Activated CD4-positive, alpha-beta memory T cell treated with anti-CD3 and anti-CD28 coated beads for 36 hours (primary cell): ENCODE measurements at regions of chr7 and their contacts with region 1.

Region 1: DNA sequence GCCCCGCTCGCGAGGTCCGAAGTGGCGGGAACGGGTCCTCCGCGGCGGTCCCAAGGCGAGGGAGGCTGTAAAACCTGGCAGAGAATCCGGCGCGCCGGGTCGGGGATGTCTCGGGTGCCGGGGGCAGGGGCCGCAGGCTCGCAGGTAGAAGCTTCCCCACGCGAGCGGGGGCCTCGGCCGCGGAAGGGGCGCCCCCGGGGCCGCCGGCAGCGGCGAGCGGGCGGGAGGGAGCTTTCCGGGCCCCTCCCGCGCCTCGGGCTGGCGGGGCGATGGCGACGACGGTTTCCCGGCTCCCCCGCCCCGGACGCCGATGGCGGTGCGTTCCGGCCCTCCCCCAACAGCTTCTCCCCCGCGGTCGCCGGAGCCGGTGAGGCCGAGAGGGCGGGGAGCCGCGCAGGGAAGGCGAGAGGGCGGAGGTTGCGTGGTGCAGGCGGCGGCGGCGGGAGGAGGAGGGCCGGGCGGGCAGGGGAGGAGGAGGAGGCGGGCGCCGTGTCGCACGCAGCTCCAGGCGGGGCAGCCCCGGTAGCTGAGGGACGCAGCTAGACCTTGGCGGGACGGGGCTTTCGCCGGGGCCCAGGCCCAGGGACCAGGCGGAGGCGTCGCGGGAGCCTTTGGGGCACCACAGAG is at the start of gene CUL1:
- DNase-seq: peak; percentile 88
- H3K4me3 Mint-ChIP-seq: peak within 1 kb of the TSS; percentile 89
- H3K27ac Mint-ChIP-seq: peak within 1 kb of the TSS; percentile 98
- H3K4me1 Mint-ChIP-seq: peaks cover 57% of the 10 kb centered on the region
- H3K27me3 Mint-ChIP-seq: no peaks in the 10 kb centered on the region
- total RNA-seq, gene CUL1: 64.7 to 69.6 TPM

Region 2: DNA sequence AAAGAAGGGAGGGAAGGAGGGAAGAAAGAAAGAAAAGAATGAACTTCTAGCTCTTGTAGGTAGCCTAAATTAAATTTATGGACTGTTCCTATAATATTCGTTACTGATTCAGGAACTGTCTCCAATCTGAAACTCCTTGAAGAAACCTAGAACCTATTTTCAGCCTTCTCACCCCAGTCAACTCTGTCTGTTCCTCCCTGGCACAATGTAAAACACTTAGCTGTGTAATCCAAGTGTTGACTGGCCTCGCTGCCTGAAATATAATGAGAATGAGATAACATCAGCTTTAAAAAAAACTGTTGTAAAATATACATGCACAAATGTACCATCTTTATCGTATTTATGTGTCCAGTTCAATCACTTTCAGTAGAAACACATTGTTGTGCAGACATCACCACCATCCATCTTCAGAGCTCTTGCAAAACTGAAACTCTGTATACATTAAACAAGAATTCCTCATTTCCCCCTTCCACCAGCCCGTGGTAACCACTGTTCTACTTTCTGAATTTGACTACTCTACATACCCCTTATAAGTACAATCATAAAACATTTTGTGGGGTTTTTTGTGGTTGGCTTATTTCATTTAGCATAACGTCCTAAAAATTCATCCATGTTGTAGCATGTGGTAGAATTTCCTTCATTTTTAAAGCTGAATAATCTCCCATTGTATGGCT is 114.2 kb before region 1 on chr7:
- CTCF ChIA-PET with region 1: no interaction called
- POLR2A ChIA-PET with region 1: interaction called, 6 read pairs
- intact Hi-C with region 1: loop called (anchors 2 kb)
- DNase-seq: peak; percentile 42
- H3K4me3 Mint-ChIP-seq: no peak overlapping the region
- H3K27ac Mint-ChIP-seq: no peak overlapping the region
- H3K4me1 Mint-ChIP-seq: peaks cover 17% of the 10 kb centered on the region
- H3K27me3 Mint-ChIP-seq: no peaks in the 10 kb centered on the region

Region 3: GRCh38 chr7:148722340-148723165 is 24.0 kb after region 1 on chr7:
- CTCF ChIA-PET with region 1: interaction called, 3 read pairs
- POLR2A ChIA-PET with region 1: interaction called, 3 read pairs
- intact Hi-C with region 1: loop called (anchors 1 kb)
- DNase-seq: no peak
- H3K4me3 Mint-ChIP-seq: no peak overlapping the region
- H3K27ac Mint-ChIP-seq: no peak overlapping the region
- H3K4me1 Mint-ChIP-seq: peaks cover 81% of the 10 kb centered on the region
- H3K27me3 Mint-ChIP-seq: no peaks in the 10 kb centered on the region

Region 4: GRCh38 chr7:148856891-148857290 is 158.4 kb after region 1 on chr7:
- CTCF ChIA-PET with region 1: no interaction called
- POLR2A ChIA-PET with region 1: no interaction called
- intact Hi-C with region 1: loop called (anchors 2 kb)
- DNase-seq: peak; percentile 50
- H3K4me3 Mint-ChIP-seq: peak overlapping the region; percentile 40
- H3K27ac Mint-ChIP-seq: peak overlapping the region; percentile 82
- H3K4me1 Mint-ChIP-seq: peaks cover 39% of the 10 kb centered on the region
- H3K27me3 Mint-ChIP-seq: no peaks in the 10 kb centered on the region

Region 5: GRCh38 chr7:148940702-148941597 is 242.4 kb after region 1 on chr7:
- CTCF ChIA-PET with region 1: interaction called, 5 read pairs
- POLR2A ChIA-PET with region 1: interaction called, 5 read pairs
- intact Hi-C with region 1: loop called (anchors 1 kb)
- DNase-seq: peak; percentile 70
- H3K4me3 Mint-ChIP-seq: peak overlapping the region; percentile 94
- H3K27ac Mint-ChIP-seq: peak overlapping the region; percentile 94
- H3K4me1 Mint-ChIP-seq: peaks cover 14% of the 10 kb centered on the region
- H3K27me3 Mint-ChIP-seq: no peaks in the 10 kb centered on the region

Region 6: DNA sequence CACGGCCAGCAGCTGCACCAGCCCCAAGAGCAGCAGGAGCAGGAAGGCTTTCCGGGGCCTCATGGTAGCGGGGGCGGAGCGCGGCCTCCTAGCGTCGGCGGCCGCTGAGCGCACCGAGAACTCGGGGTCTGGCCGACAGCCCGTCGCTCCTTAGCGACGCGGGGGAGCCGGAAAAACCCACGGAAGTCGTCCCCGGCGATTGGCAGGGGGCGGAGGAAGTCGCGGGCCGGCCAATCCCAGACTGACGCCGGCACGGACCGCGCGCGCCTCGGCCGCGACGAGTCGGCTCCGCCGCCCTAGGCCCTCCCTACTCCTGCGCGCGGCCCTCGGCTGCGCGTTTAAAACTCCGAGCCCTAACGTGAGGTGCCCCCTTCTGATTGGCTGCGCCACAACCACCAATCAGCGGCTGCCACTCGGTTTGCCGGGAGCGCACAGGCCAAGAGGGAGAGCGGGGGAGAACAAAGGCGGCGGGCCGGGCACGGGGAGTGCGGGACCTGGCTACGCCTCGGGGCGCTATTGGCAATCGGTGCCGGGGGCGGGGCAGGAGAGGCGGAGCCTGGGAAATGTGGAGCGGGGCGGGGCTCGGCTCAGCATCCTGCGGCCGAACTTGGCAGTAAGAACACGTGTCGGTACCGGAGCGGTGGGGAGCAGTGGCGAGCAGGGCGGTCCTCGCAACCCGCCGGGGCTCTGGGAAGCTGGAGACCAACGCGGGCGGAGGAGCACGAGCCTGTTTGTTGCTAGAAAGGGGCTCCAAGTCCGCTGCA is 330.0 kb after region 1 on chr7 and contains the start of gene PDIA4:
- CTCF ChIA-PET with region 1: no interaction called
- POLR2A ChIA-PET with region 1: no interaction called
- intact Hi-C with region 1: loop called (anchors 1 kb)
- DNase-seq: peak; percentile 100
- H3K4me3 Mint-ChIP-seq: peak within 1 kb of the TSS; percentile 96
- H3K27ac Mint-ChIP-seq: peak within 1 kb of the TSS; percentile 88
- H3K4me1 Mint-ChIP-seq: peaks cover 33% of the 10 kb centered on the region
- H3K27me3 Mint-ChIP-seq: no peaks in the 10 kb centered on the region
- total RNA-seq, gene PDIA4: 108 to 112 TPM